AG04450 (cell line): ENCODE measurements at regions of chr9 and their contacts with region 1.

Region 1: GRCh38 chr9:1922026-1922425 is 93.1 kb upstream of the SMARCA2 start:
- DNase-seq: no peak
- H3K4me3 ChIP-seq: no peak overlapping the region
- H3K27ac ChIP-seq: no peak overlapping the region
- H3K27me3 ChIP-seq: peaks cover 7% of the 10 kb centered on the region
- CTCF ChIP-seq: no peak

Region 2: GRCh38 chr9:1994180-1994579 is 72.2 kb after region 1 on chr9:
- CTCF ChIA-PET with region 1: no interaction called
- POLR2A ChIA-PET with region 1: interaction called, 14 read pairs
- DNase-seq: no peak
- H3K4me3 ChIP-seq: no peak overlapping the region
- H3K27ac ChIP-seq: no peak overlapping the region
- H3K27me3 ChIP-seq: peaks cover 3% of the 10 kb centered on the region
- CTCF ChIP-seq: 0 out of 2 replicates have a peak, but pooled peaks have one; percentile 7